GM13977 (cell line): ENCODE measurements at regions of chr1 and their contacts with region 1.

Region 1: DNA sequence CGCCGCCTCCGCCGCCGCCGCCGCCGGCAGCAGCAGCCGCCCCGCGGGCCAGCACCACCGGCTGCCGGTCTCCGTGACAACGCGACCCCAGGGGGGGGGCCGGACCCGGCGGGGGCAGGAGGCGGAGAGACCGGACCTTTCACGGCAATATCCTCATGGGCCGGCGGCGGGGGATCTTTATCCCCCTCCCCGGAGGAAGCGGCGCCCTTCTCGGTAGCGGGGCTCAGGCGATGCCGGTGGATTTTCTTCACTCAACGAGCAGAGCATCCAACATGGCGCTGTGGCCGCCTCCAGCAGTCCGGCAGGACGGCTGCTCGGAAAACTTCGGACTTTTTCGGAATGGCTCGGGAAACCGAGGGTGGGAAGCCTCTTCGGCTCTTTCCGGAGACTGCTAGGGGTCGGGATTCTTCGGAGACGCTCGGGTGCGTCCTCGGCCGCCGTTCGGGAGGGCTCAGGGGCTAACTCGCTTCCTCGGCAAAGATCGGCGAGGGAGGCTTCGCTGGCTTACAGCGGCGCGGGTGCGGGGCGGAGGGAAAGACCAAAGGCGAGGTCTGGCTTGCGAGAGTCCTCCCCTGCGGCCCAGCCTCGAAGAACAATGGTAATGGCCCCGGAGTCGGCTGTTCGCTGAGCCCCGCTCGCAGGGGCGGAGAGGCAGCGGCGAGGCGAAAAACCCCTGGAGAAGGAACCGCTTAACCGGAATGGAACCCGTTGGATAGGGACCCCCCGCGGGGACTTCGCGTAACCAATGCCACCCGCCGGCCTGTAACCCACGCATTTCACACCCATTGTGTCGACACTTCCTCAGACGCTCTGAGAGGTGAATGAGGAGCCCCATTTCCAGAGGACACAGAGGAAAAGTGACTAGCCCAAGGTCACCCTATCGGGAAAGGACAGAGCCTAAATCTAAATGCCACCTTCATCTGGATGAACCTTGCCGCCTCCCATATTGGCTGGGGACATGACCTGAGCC is at the start of gene EIF4G3:
- DNase-seq: peak; percentile 99
- CTCF ChIP-seq: no peak

Region 2: GRCh38 chr1:20840731-20841130 is 336.1 kb before region 1 on chr1:
- in situ Hi-C with region 1: no loop called
- DNase-seq: no peak
- CTCF ChIP-seq: no peak

Region 3: GRCh38 chr1:20981915-20982314 is 195.0 kb before region 1 on chr1:
- in situ Hi-C with region 1: loop called (anchors 25 kb)
- DNase-seq: no peak
- CTCF ChIP-seq: peak; percentile 36

Region 4: GRCh38 chr1:21106709-21107108 is 70.2 kb before region 1 on chr1:
- in situ Hi-C with region 1: no loop called
- DNase-seq: no peak
- CTCF ChIP-seq: no peak

Region 5: GRCh38 chr1:21703318-21703963 is 526.6 kb after region 1 on chr1:
- in situ Hi-C with region 1: no loop called
- DNase-seq: no peak
- CTCF ChIP-seq: peak; percentile 42

Region 6: GRCh38 chr1:22557341-22557950 is 1380.6 kb after region 1 on chr1:
- in situ Hi-C with region 1: no loop called
- DNase-seq: no peak
- CTCF ChIP-seq: no peak